ENCODE measurements at regions of chr13 and their contacts with region 1.

Region 1: DNA sequence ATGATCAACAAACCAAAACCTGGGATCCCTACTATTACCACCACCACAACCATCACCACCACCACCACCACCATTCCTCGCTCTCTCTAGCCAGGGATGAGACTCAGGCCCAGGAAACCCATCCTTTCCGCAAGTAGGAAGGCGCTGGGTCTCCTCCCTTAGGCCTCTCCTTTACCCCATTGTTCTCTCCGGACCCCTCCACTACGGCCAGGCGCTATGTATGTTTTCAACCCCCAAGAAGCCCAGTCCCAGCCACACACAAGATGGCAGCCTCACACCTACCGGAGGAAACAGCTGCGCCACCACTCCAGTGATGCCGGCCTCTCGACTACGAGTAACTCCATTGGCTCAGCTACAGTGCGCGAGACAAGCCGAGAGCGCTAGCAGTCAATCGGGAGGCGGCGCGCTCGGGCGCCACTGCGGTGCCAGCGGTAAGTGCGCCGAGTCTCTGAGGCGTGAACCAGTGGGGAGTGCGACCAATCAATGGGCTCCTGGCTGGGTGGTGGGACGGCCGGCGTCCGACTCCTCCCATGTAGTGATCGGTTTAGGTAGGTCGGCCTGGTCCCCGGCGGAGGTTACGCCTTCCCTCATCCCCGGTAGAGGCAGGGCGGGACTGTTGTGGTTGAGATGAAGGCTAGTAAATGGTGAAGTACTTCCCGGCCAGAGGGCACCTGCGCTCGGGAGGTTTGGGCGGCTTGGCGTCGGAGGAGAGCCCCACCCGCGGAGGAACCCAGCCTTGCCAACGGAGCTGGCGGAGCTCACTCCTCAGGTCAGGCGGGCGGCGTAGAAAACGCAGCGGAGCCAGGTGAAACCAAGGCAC is at the starts of genes CAB39L and SETDB2:
- DNase-seq: peak; percentile 97 to 100 (median 98)
- ATAC-seq: peak; percentile 88
- H3K4me3 ChIP-seq: peak within 1 kb of the TSS; percentile 76
- H3K4me3 Mint-ChIP-seq: peak within 1 kb of the TSS; percentile 97
- H3K27ac ChIP-seq: peak within 1 kb of the TSS; percentile 85
- H3K27ac Mint-ChIP-seq: peak within 1 kb of the TSS; percentile 96
- H3K4me1 ChIP-seq: peaks cover 18% of the 10 kb centered on the region
- H3K4me1 Mint-ChIP-seq: peaks cover 48% of the 10 kb centered on the region
- H3K27me3 ChIP-seq: no peaks in the 10 kb centered on the region
- H3K27me3 Mint-ChIP-seq: no peaks in the 10 kb centered on the region
- CTCF ChIP-seq: peak; percentile 41
- total RNA-seq, gene CAB39L: 1.9 to 2.5 TPM
- total RNA-seq, gene SETDB2: 10.8 to 11.5 TPM

Region 2: GRCh38 chr13:48000778-48001628 is 1442.9 kb before region 1 on chr13 and contains the start of gene SUCLA2:
- CTCF ChIA-PET with region 1: no interaction called
- POLR2A ChIA-PET with region 1: no interaction called
- intact Hi-C with region 1: loop called in 1 of 2 experiments (anchors 5 kb)
- DNase-seq: peak; percentile 76 to 94 (median 88)
- ATAC-seq: peak; percentile 99
- H3K4me3 ChIP-seq: peak within 1 kb of the TSS; percentile 99
- H3K4me3 Mint-ChIP-seq: peak within 1 kb of the TSS; percentile 96
- H3K27ac ChIP-seq: peak within 1 kb of the TSS; percentile 58
- H3K27ac Mint-ChIP-seq: peak within 1 kb of the TSS; percentile 90
- H3K4me1 ChIP-seq: peaks cover 6% of the 10 kb centered on the region
- H3K4me1 Mint-ChIP-seq: peaks cover 46% of the 10 kb centered on the region
- H3K27me3 ChIP-seq: no peaks in the 10 kb centered on the region
- H3K27me3 Mint-ChIP-seq: no peaks in the 10 kb centered on the region
- CTCF ChIP-seq: no peak
- total RNA-seq, gene SUCLA2: 18.7 to 21.4 TPM

Region 3: DNA sequence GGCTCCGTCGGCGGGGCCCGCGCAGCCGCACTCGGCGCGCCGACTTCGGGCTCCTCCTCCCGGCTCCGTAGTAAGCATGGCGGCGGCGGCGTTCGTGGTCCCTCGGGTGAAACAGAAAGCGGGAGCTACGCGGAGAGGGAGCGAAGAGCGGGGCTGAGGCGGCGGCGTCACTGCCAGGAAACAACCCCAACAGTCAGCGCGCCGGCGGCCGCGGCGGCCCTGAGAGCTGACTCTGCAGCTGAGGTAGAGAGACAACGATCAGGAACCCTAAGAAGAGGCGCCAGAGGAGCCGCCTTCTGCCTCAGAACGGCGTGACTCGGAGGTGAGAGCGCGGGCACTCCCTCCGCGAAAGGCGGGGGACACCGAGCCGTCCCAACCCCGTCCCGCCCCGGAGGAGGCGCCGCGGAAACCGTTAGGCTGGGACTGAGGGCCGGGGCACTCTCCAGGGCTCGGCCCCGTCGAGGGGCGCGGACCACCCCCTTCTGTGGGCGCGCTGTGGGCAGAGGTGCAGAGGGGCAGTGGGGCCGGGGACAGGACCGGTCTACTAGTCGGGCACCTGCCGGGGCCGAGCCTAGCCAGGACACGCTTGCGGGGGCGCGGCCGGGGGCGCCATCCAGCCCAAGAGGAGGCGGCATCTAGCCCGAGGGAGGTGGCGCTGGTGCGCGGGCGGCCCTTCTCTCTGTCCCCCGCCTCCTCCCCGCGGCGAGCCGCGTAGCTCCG is 467.9 kb before region 1 on chr13 and contains the start of gene FNDC3A:
- CTCF ChIA-PET with region 1: no interaction called
- POLR2A ChIA-PET with region 1: interaction called, 19 read pairs
- intact Hi-C with region 1: loop called (anchors 2 to 10 kb)
- DNase-seq: peak; percentile 74 to 94 (median 82)
- ATAC-seq: peak; percentile 68
- H3K4me3 ChIP-seq: peak within 1 kb of the TSS; percentile 80
- H3K4me3 Mint-ChIP-seq: peak within 1 kb of the TSS; percentile 99
- H3K27ac ChIP-seq: peak within 1 kb of the TSS; percentile 95 to 97
- H3K27ac Mint-ChIP-seq: peak within 1 kb of the TSS; percentile 98
- H3K4me1 ChIP-seq: peaks cover 9% of the 10 kb centered on the region
- H3K4me1 Mint-ChIP-seq: peaks cover 54% of the 10 kb centered on the region
- H3K27me3 ChIP-seq: no peaks in the 10 kb centered on the region
- H3K27me3 Mint-ChIP-seq: no peaks in the 10 kb centered on the region
- CTCF ChIP-seq: no peak
- total RNA-seq, gene FNDC3A: 27.7 to 28.6 TPM

Region 4: GRCh38 chr13:49407936-49408335 is 36.0 kb before region 1 on chr13:
- CTCF ChIA-PET with region 1: no interaction called
- POLR2A ChIA-PET with region 1: no interaction called
- intact Hi-C with region 1: no loop called
- DNase-seq: no peak
- ATAC-seq: no peak
- H3K4me3 ChIP-seq: no peak overlapping the region
- H3K4me3 Mint-ChIP-seq: no peak overlapping the region
- H3K27ac ChIP-seq: no peak overlapping the region
- H3K27ac Mint-ChIP-seq: no peak overlapping the region
- H3K4me1 ChIP-seq: no peaks in the 10 kb centered on the region
- H3K4me1 Mint-ChIP-seq: no peaks in the 10 kb centered on the region
- H3K27me3 ChIP-seq: no peaks in the 10 kb centered on the region
- H3K27me3 Mint-ChIP-seq: no peaks in the 10 kb centered on the region
- CTCF ChIP-seq: no peak

Region 5: GRCh38 chr13:49454388-49455006 is 10.6 kb after region 1 on chr13:
- CTCF ChIA-PET with region 1: interaction called, 4 read pairs
- POLR2A ChIA-PET with region 1: interaction called, 27 read pairs
- intact Hi-C with region 1: no loop called
- DNase-seq: peak in 3 of 14 experiments; percentile 22 to 61 (median 30)
- ATAC-seq: peak; percentile 73
- H3K4me3 ChIP-seq: no peak overlapping the region
- H3K4me3 Mint-ChIP-seq: peak overlapping the region; percentile 62
- H3K27ac ChIP-seq: peak overlapping the region in 1 of 2 donors; percentile 47
- H3K27ac Mint-ChIP-seq: peak overlapping the region; percentile 70
- H3K4me1 ChIP-seq: peaks cover 4% of the 10 kb centered on the region
- H3K4me1 Mint-ChIP-seq: peaks cover 64% of the 10 kb centered on the region
- H3K27me3 ChIP-seq: no peaks in the 10 kb centered on the region
- H3K27me3 Mint-ChIP-seq: no peaks in the 10 kb centered on the region
- CTCF ChIP-seq: no peak

Region 6: DNA sequence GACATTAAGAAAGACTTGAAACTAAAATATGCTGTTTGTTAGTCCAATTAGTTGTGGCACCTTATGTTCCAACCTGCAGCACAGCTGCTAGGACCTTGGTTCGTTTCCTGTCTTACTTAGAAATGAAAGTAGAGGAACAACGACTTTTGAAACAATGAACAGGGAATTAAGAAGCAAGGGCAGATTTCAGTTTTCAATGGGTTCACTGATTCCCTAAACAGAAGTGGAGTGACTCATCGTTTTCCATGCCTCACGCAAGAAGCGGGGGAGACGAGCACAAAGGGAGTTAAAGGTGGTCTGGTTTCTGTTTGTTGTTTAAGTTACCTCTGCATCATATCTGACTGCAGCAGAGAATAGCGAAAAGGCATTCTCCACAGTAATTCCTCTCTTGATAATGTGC is 96.6 kb after region 1 on chr13:
- CTCF ChIA-PET with region 1: no interaction called
- POLR2A ChIA-PET with region 1: interaction called, 19 read pairs
- intact Hi-C with region 1: no loop called
- DNase-seq: peak in 5 of 14 experiments; percentile 7 to 32 (median 25)
- ATAC-seq: peak; percentile 66
- H3K4me3 ChIP-seq: peak overlapping the region; percentile 44
- H3K4me3 Mint-ChIP-seq: peak overlapping the region; percentile 86
- H3K27ac ChIP-seq: peak overlapping the region in 1 of 2 donors; percentile 30
- H3K27ac Mint-ChIP-seq: peak overlapping the region; percentile 93
- H3K4me1 ChIP-seq: peaks cover 9% of the 10 kb centered on the region
- H3K4me1 Mint-ChIP-seq: peaks cover 22% of the 10 kb centered on the region
- H3K27me3 ChIP-seq: no peaks in the 10 kb centered on the region
- H3K27me3 Mint-ChIP-seq: no peaks in the 10 kb centered on the region
- CTCF ChIP-seq: no peak

Region 7: GRCh38 chr13:49690992-49691886 is 247.3 kb after region 1 on chr13 and contains the start of gene EBPL:
- CTCF ChIA-PET with region 1: no interaction called
- POLR2A ChIA-PET with region 1: interaction called, 10 read pairs
- intact Hi-C with region 1: loop called in 1 of 2 experiments (anchors 10 kb)
- DNase-seq: peak; percentile 66 to 95 (median 84)
- ATAC-seq: peak; percentile 95
- H3K4me3 ChIP-seq: peak within 1 kb of the TSS; percentile 93
- H3K4me3 Mint-ChIP-seq: peak within 1 kb of the TSS; percentile 92
- H3K27ac ChIP-seq: peak within 1 kb of the TSS; percentile 49 to 52
- H3K27ac Mint-ChIP-seq: peak within 1 kb of the TSS; percentile 71
- H3K4me1 ChIP-seq: peaks cover 19% of the 10 kb centered on the region
- H3K4me1 Mint-ChIP-seq: peaks cover 52% of the 10 kb centered on the region
- H3K27me3 ChIP-seq: no peaks in the 10 kb centered on the region
- H3K27me3 Mint-ChIP-seq: no peaks in the 10 kb centered on the region
- CTCF ChIP-seq: no peak
- total RNA-seq, gene EBPL: 22.3 to 23.2 TPM

Region 8: GRCh38 chr13:50071379-50071778 is 627.5 kb after region 1 on chr13:
- CTCF ChIA-PET with region 1: no interaction called
- POLR2A ChIA-PET with region 1: no interaction called
- intact Hi-C with region 1: no loop called
- DNase-seq: no peak
- ATAC-seq: no peak
- H3K4me3 ChIP-seq: no peak overlapping the region
- H3K4me3 Mint-ChIP-seq: no peak overlapping the region
- H3K27ac ChIP-seq: no peak overlapping the region
- H3K27ac Mint-ChIP-seq: no peak overlapping the region
- H3K4me1 ChIP-seq: peaks cover 2% of the 10 kb centered on the region
- H3K4me1 Mint-ChIP-seq: peaks cover 21% of the 10 kb centered on the region
- H3K27me3 ChIP-seq: no peaks in the 10 kb centered on the region
- H3K27me3 Mint-ChIP-seq: peaks cover 13% of the 10 kb centered on the region
- CTCF ChIP-seq: no peak